Psoas muscle (tissue), 8 donors: ENCODE measurements at regions of chr5 and their contacts with region 1.

Region 1: DNA sequence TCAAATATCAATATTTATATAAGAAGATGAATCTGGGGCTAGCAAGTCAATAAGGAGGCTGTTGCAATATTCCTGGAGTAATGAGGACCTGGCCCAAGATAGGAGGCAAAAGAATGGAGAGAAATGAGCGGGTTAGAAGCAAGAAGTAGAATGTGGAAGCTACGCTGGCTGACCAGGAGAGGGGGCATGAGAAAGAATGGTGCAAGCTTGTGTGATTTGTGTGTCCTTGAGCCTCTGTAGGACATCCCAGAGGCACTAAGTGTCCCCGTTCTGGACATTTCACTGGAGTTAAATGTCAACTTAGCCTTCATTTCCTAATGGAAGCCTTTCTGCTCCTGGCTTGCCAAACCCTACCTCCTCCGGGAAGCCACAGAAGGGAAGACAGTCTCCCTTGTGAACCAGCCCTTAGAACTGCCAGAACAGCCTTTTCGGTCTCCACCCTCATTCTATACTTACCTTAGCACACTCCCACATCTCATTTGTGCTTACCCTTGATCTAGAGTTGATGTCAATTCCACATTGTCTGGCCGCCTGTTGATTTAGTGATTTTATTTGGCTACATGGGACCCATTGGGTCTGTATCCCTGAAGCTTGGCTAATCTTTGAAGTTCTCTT is 6.6 kb upstream of the PDE6A start:
- DNase-seq: no peak
- ATAC-seq: no peak
- H3K4me3 ChIP-seq: no peak overlapping the region
- H3K27ac ChIP-seq: no peak overlapping the region
- H3K4me1 ChIP-seq: no peaks in the 10 kb centered on the region
- H3K27me3 ChIP-seq: no peaks in the 10 kb centered on the region
- CTCF ChIP-seq: no peak

Region 2: GRCh38 chr5:149711338-149711737 is 239.9 kb before region 1 on chr5:
- intact Hi-C with region 1: loop called in 1 of 2 experiments (anchors 5 kb)
- DNase-seq: no peak
- ATAC-seq: no peak
- H3K4me3 ChIP-seq: no peak overlapping the region
- H3K27ac ChIP-seq: no peak overlapping the region
- H3K4me1 ChIP-seq: no peaks in the 10 kb centered on the region
- H3K27me3 ChIP-seq: no peaks in the 10 kb centered on the region
- CTCF ChIP-seq: no peak